CD8-positive, alpha-beta T cell (primary cell): ENCODE measurements at regions of chr7 and their contacts with region 1.

Region 1: DNA sequence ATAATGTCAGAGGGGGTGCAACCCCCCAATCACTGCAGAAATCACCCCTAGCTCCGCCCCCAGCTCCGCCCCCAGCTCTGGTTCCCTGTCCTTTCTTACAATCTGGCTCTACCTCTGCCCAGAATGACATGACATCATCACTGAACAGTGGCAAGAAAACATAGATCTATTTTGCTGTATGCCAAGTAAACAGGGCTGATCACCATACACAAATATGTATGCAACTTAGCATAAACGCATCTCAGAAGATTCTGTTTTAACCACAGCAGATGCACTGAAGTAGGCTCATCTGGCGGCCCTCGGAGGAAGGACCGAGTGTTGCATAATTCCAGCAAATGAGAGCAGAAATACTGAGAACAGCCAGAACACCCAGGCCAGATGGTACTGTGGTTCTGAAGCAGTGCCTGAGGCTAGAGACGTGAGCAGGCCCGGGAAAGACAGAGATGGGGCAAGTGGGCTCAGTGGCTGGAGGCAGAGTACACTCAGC is 293.3 kb upstream of the KLF14 start:
- DNase-seq: peak in 4 of 9 experiments; percentile 60 to 69 (median 64)
- ATAC-seq: peak; percentile 50
- H3K4me3 ChIP-seq: no peak overlapping the region
- H3K4me3 Mint-ChIP-seq: no peak overlapping the region
- H3K27ac ChIP-seq: peak overlapping the region in 1 of 2 experiments; percentile 46
- H3K27ac Mint-ChIP-seq: peak overlapping the region; percentile 55
- H3K4me1 ChIP-seq: peaks cover 54% of the 10 kb centered on the region
- H3K4me1 Mint-ChIP-seq: peaks cover 87% of the 10 kb centered on the region
- H3K27me3 ChIP-seq: no peaks in the 10 kb centered on the region
- H3K27me3 Mint-ChIP-seq: no peaks in the 10 kb centered on the region
- CTCF ChIP-seq: no peak

Region 2: DNA sequence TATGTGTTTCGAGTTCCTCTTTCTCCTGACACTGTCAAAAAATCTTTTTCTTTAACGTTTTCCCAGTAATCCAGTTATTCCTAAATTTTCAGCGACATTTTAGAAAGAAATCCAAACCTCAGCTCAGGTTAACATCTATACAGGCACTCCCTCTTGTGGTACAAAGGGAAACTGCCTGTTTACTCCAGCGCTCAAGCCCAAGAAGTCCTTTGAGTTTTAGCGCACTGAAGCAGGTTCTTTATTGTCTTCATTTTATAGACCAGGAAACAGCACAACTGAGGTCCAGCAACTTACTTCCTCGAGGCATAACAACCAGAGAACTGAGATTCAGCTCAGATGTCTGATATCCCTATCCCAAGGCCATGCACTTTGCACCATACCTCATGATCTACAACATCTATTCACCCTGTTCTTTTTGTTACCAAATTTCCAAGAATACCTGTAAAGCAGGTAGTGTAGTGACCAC is 13.2 kb after region 1 on chr7:
- CTCF ChIA-PET with region 1: interaction called, 9 read pairs
- POLR2A ChIA-PET with region 1: interaction called, 3 read pairs
- intact Hi-C with region 1: loop called in 1 of 2 experiments (anchors 2 kb)
- DNase-seq: peak in 3 of 9 experiments; percentile 49 to 81 (median 73)
- ATAC-seq: peak; percentile 54
- H3K4me3 ChIP-seq: no peak overlapping the region
- H3K4me3 Mint-ChIP-seq: peak overlapping the region; percentile 27
- H3K27ac ChIP-seq: peak overlapping the region in 1 of 2 experiments; percentile 3
- H3K27ac Mint-ChIP-seq: peak overlapping the region; percentile 24
- H3K4me1 ChIP-seq: peaks cover 46% of the 10 kb centered on the region
- H3K4me1 Mint-ChIP-seq: peaks cover 68% of the 10 kb centered on the region
- H3K27me3 ChIP-seq: no peaks in the 10 kb centered on the region
- H3K27me3 Mint-ChIP-seq: no peaks in the 10 kb centered on the region
- CTCF ChIP-seq: peak; percentile 94

Region 3: DNA sequence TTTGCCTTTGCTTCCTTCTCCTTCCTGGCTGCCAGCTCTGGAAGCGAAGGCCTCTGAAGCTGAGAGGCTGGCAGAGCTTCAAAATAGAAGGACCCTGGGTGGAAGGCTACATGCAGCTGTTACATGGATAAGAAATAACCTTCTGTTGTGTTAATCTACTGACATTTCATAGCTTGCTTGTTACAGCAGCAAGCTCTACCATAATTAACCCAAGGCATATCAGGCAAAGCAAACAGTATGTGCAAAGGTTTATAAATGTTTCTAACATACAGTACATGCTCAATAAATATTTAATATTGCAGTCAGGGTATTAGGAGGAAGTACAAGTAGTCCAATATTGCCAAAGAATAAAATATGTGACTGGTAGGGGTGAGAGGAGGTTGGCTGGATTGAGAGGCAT is 244.8 kb after region 1 on chr7:
- CTCF ChIA-PET with region 1: no interaction called
- POLR2A ChIA-PET with region 1: no interaction called
- intact Hi-C with region 1: no loop called
- DNase-seq: no peak
- ATAC-seq: no peak
- H3K4me3 ChIP-seq: no peak overlapping the region
- H3K4me3 Mint-ChIP-seq: no peak overlapping the region
- H3K27ac ChIP-seq: no peak overlapping the region
- H3K27ac Mint-ChIP-seq: no peak overlapping the region
- H3K4me1 ChIP-seq: no peaks in the 10 kb centered on the region
- H3K4me1 Mint-ChIP-seq: no peaks in the 10 kb centered on the region
- H3K27me3 ChIP-seq: no peaks in the 10 kb centered on the region
- H3K27me3 Mint-ChIP-seq: no peaks in the 10 kb centered on the region
- CTCF ChIP-seq: no peak